Caco-2 (cell line): ENCODE measurements at regions of chr17 and their contacts with region 1.

Region 1: DNA sequence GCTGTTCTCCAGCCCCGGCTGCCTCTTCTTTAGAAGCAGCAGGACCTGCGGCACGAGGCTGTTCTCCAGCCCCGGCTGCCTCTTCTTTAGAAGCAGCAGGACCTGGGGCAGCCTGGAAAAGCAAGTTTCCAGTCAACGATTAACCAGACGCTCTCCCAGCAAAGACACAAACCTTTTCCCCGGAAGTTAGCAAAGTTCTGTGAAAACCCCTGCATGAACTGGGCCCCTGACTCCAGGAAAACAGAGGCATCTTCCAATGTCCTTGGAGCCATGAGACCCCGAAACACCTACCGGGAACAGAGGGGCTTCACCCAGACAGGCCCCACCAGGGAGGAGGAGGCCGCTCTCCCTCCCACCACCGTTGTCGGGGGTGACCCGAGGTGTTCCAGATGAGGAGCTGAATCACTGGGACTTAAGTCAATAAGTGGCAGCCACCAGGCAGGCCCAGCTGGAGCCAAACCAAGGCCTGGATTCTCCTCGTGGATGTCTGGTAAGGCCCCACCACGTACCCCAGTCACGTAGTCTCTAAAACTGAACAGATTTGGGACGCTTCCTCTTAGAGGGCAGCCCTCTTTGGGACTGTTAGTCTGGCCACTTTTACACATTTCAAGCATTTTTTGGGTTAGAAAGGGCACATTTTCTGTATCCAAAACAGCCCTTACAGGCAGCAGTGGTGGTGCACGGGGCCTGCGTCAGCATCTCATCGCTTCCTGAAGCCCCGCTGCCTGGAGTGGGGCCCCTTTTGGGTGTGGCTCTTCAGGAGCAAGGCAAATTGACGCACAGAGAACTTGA is at the start of gene RPH3AL:
- DNase-seq: peak; percentile 91 to 94
- H3K4me3 ChIP-seq: peak within 1 kb of the TSS; percentile 44
- H3K4me3 Mint-ChIP-seq: peak within 1 kb of the TSS; percentile 86
- H3K27ac Mint-ChIP-seq: peak within 1 kb of the TSS; percentile 98
- H3K4me1 ChIP-seq: peaks cover 29% of the 10 kb centered on the region
- H3K4me1 Mint-ChIP-seq: peaks cover 42% of the 10 kb centered on the region
- H3K27me3 ChIP-seq: no peaks in the 10 kb centered on the region
- H3K27me3 Mint-ChIP-seq: no peaks in the 10 kb centered on the region
- CTCF ChIP-seq: no peak
- total RNA-seq, gene RPH3AL: 36.0 and 37.0 TPM in 2 replicates

Region 2: GRCh38 chr17:385926-386876 is 33.6 kb after region 1 on chr17:
- CTCF ChIA-PET with region 1: no interaction called
- POLR2A ChIA-PET with region 1: no interaction called
- intact Hi-C with region 1: loop called (anchors 2 kb)
- DNase-seq: peak; percentile 84 to 92
- H3K4me3 ChIP-seq: peak overlapping the region; percentile 65
- H3K4me3 Mint-ChIP-seq: peak overlapping the region; percentile 71
- H3K27ac Mint-ChIP-seq: peak overlapping the region; percentile 56
- H3K4me1 ChIP-seq: peaks cover 22% of the 10 kb centered on the region
- H3K4me1 Mint-ChIP-seq: peaks cover 24% of the 10 kb centered on the region
- H3K27me3 ChIP-seq: no peaks in the 10 kb centered on the region
- H3K27me3 Mint-ChIP-seq: no peaks in the 10 kb centered on the region
- CTCF ChIP-seq: peak; percentile 56 to 65

Region 3: GRCh38 chr17:996554-997344 is 644.1 kb after region 1 on chr17 and contains the start of gene TIMM22:
- CTCF ChIA-PET with region 1: no interaction called
- POLR2A ChIA-PET with region 1: no interaction called
- intact Hi-C with region 1: loop called (anchors 1 kb)
- DNase-seq: peak; percentile 97
- H3K4me3 ChIP-seq: peak within 1 kb of the TSS; percentile 87
- H3K4me3 Mint-ChIP-seq: peak within 1 kb of the TSS; percentile 97
- H3K27ac Mint-ChIP-seq: peak within 1 kb of the TSS; percentile 99
- H3K4me1 ChIP-seq: peaks cover 10% of the 10 kb centered on the region
- H3K4me1 Mint-ChIP-seq: peaks cover 11% of the 10 kb centered on the region
- H3K27me3 ChIP-seq: no peaks in the 10 kb centered on the region
- H3K27me3 Mint-ChIP-seq: no peaks in the 10 kb centered on the region
- CTCF ChIP-seq: peak; percentile 93 to 95
- total RNA-seq, gene TIMM22: 20.1 and 20.6 TPM in 2 replicates